ENCODE measurements at regions of chr1 and their contacts with region 1.

Region 1: DNA sequence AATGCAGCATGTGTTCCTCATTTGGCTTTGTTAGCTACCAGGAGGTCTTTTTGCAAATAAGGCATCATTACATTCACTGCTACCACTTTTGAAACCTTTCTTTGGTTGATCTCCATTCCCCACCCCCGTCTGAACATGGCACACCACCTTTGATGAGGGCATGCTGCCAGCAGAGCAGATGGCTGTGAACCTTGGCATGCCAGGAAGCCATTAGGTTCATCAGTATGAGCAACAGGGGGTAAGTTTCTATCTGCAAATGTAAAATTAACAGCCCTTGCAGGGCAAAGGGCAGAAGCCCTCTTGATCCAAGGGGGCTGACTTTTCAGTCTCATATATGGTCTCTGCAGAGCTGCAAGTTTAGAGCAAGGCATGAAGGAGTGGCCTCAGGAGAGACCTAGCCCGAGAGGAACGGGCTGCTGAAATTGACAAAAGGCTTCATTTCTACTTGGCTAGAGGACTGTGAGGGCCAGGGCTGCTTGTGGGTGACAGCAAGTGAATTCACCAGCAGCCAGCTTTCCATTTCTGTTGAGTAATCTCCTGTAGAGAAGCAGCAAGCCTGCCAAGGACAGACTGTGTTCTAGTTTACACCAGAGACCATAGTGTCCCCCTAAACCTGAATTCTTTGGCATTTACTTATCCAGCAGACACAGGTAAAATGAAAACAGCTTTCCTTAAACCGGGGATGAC is 127.9 kb downstream of the ZNF326 start:
- DNase-seq: no peak
- ATAC-seq: no peak
- H3K4me3 Mint-ChIP-seq: no peak overlapping the region
- H3K27ac Mint-ChIP-seq: no peak overlapping the region
- H3K4me1 Mint-ChIP-seq: peaks cover 3% of the 10 kb centered on the region
- H3K27me3 Mint-ChIP-seq: no peaks in the 10 kb centered on the region
- CTCF ChIP-seq: no peak

Region 2: GRCh38 chr1:90133133-90133532 is 10.3 kb after region 1 on chr1:
- CTCF ChIA-PET with region 1: interaction called, 14 read pairs
- POLR2A ChIA-PET with region 1: no interaction called
- DNase-seq: peak; percentile 28
- ATAC-seq: peak; percentile 80
- H3K4me3 Mint-ChIP-seq: no peak overlapping the region
- H3K27ac Mint-ChIP-seq: no peak overlapping the region
- H3K4me1 Mint-ChIP-seq: peaks cover 10% of the 10 kb centered on the region
- H3K27me3 Mint-ChIP-seq: no peaks in the 10 kb centered on the region
- CTCF ChIP-seq: no peak